ENCODE measurements at regions of chr5 and their contacts with region 1.

Region 1: GRCh38 chr5:147935032-147935431 is 28.7 kb upstream of the C5orf46 start:
- DNase-seq: peak; percentile 96
- ATAC-seq: peak; percentile 95
- H3K4me3 ChIP-seq: no peak overlapping the region
- H3K27ac ChIP-seq: peak overlapping the region; percentile 18
- H3K4me1 ChIP-seq: peaks cover 25% of the 10 kb centered on the region
- H3K27me3 ChIP-seq: no peaks in the 10 kb centered on the region
- CTCF ChIP-seq: peak; percentile 96

Region 2: DNA sequence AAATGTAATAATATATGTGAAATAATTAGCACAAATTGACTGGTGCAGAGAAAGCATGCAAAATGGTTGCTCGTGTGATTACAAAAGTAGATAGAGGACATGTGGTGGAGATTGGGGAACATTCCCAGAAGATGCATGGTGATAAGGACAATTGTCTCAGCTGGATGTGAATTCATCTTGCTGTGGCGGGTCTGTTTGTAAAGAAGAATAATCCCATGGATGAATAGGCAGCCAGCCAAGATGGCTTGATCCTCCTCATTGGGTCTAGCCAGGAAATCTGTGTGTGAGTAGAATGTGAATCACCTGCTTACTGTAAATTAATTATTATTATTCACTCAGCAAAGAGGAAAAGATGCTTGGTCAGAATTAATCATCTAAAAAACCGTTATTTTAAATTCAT is 412.6 kb before region 1 on chr5:
- CTCF ChIA-PET with region 1: no interaction called
- POLR2A ChIA-PET with region 1: no interaction called
- intact Hi-C with region 1: no loop called
- DNase-seq: peak; percentile 53
- ATAC-seq: peak; percentile 66
- H3K4me3 ChIP-seq: no peak overlapping the region
- H3K27ac ChIP-seq: peak overlapping the region; percentile 18; the same call in 1 of the 2 replicates
- H3K4me1 ChIP-seq: peaks cover 4% of the 10 kb centered on the region; the same call in 1 of the 2 replicates
- H3K27me3 ChIP-seq: no peaks in the 10 kb centered on the region
- CTCF ChIP-seq: no peak

Region 3: GRCh38 chr5:147628058-147628895 is 306.8 kb before region 1 on chr5:
- CTCF ChIA-PET with region 1: no interaction called
- POLR2A ChIA-PET with region 1: no interaction called
- intact Hi-C with region 1: loop called (anchors 1 kb)
- DNase-seq: peak; percentile 97
- ATAC-seq: peak; percentile 96
- H3K4me3 ChIP-seq: no peak overlapping the region
- H3K27ac ChIP-seq: no peak overlapping the region
- H3K4me1 ChIP-seq: no peaks in the 10 kb centered on the region
- H3K27me3 ChIP-seq: no peaks in the 10 kb centered on the region
- CTCF ChIP-seq: peak; percentile 95

Region 4: DNA sequence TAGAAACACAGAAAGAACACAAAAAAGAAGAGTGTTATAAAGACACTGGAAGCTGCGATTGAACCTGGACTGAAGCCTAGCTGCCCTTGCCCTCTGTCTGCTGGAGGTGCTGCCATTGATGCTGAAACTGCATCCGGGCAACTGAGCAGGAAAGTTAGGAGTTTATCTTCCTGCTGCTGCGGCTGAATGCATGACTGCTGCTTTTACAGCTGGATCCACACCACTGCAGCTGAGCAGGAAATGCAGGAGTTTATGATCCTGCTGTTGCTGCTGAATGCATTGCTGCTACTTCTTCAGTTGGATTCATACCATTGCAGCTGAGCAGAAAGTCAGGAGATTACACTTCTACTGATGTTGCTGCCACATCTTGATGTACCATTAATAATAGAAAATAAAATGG is 130.7 kb before region 1 on chr5:
- CTCF ChIA-PET with region 1: no interaction called
- POLR2A ChIA-PET with region 1: no interaction called
- intact Hi-C with region 1: no loop called
- DNase-seq: no peak
- ATAC-seq: no peak; the same call in 1 of the 2 replicates
- H3K4me3 ChIP-seq: peak overlapping the region; percentile 32; the same call in 1 of the 2 replicates
- H3K27ac ChIP-seq: peak overlapping the region; percentile 66
- H3K4me1 ChIP-seq: peaks cover 25% of the 10 kb centered on the region
- H3K27me3 ChIP-seq: no peaks in the 10 kb centered on the region
- CTCF ChIP-seq: no peak

Region 5: DNA sequence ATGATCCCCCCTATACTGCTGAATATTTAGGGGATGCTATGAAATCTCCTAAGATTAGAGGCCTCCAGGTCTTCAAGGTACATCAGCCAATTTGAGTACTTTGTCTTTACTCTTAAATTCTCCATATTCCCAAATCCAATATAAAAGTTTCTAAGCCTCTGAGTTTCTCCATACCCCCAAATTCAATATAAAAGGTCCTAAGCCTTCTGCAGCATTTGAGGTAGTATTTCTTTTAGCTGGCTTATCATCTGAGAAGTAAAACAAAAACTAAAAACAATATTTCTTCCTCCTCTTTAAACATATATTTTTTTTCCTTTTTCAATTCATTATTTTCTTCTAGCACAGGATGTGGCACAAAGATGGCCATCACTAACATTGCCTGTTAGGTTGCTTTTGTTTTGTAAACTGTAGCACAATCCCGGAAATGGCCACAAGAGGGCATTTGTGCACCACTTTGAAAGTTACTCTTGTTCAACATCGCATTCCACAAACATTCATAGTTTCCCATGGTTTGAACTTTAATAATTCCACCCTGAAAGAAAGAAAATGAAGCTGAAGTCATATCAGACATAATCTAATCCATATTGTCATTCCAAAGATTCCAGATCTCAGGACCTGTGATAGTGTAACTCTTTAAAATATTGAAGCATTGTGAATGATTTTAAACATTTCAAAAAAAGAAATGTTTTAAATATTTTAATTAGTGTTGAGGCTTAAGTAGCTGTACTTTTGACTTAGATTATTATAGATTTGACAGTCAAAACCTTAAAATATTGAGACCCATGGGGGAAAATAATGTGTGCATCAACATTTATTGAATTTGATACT is 77.5 kb before region 1 on chr5:
- CTCF ChIA-PET with region 1: interaction called, 49 read pairs
- POLR2A ChIA-PET with region 1: no interaction called
- intact Hi-C with region 1: loop called (anchors 1 kb)
- DNase-seq: peak; percentile 95
- ATAC-seq: peak; percentile 79
- H3K4me3 ChIP-seq: no peak overlapping the region
- H3K27ac ChIP-seq: no peak overlapping the region
- H3K4me1 ChIP-seq: peaks cover 18% of the 10 kb centered on the region
- H3K27me3 ChIP-seq: no peaks in the 10 kb centered on the region
- CTCF ChIP-seq: peak; percentile 98

Region 6: GRCh38 chr5:147887024-147887627 is 47.9 kb before region 1 on chr5:
- CTCF ChIA-PET with region 1: interaction called, 21 read pairs
- POLR2A ChIA-PET with region 1: interaction called, 13 read pairs
- intact Hi-C with region 1: loop called (anchors 1 kb)
- DNase-seq: peak; percentile 80
- ATAC-seq: peak; percentile 63
- H3K4me3 ChIP-seq: no peak overlapping the region
- H3K27ac ChIP-seq: peak overlapping the region; percentile 97
- H3K4me1 ChIP-seq: peaks cover 51% of the 10 kb centered on the region
- H3K27me3 ChIP-seq: no peaks in the 10 kb centered on the region
- CTCF ChIP-seq: peak; percentile 96

Region 7: GRCh38 chr5:147898875-147899401 is 36.1 kb before region 1 on chr5:
- CTCF ChIA-PET with region 1: interaction called, 14 read pairs
- POLR2A ChIA-PET with region 1: no interaction called
- intact Hi-C with region 1: no loop called
- DNase-seq: peak; percentile 98
- ATAC-seq: peak; percentile 82
- H3K4me3 ChIP-seq: peak overlapping the region; percentile 22
- H3K27ac ChIP-seq: peak overlapping the region; percentile 97
- H3K4me1 ChIP-seq: peaks cover 96% of the 10 kb centered on the region
- H3K27me3 ChIP-seq: no peaks in the 10 kb centered on the region
- CTCF ChIP-seq: no peak

Region 8: DNA sequence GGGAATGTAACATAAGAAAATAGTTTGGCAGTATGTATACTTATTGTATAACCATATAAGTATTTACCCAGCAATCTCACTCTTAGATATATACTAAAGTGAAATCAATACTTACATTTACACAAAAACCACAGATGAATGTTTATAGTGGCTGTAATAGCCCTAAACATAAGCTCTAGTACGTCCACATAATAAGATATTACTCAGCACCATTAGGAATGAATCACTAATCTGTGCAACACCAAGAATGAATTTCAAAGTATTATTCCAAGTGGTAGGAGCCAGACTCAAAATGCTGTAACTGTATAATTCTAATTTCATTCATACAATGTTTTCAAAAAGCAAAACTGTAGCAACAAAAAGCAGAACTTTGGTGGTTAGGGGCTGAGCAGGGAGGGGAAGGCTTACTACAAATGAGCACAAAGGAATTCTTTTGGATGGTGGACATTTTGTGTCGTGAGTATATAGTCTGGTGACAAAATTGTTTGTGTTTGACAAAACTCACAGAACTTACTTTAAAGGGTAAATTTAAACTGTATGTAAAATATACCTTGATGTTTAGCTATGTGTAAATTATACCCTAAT is 16.8 kb before region 1 on chr5:
- CTCF ChIA-PET with region 1: interaction called, 3 read pairs
- POLR2A ChIA-PET with region 1: interaction called, 14 read pairs
- intact Hi-C with region 1: no loop called
- DNase-seq: peak; percentile 94
- ATAC-seq: peak; percentile 73
- H3K4me3 ChIP-seq: peak overlapping the region; percentile 52; the same call in 1 of the 2 replicates
- H3K27ac ChIP-seq: peak overlapping the region; percentile 97
- H3K4me1 ChIP-seq: peaks cover 72% of the 10 kb centered on the region
- H3K27me3 ChIP-seq: no peaks in the 10 kb centered on the region
- CTCF ChIP-seq: no peak

Region 9: GRCh38 chr5:148364343-148364742 is 429.3 kb after region 1 on chr5:
- CTCF ChIA-PET with region 1: no interaction called
- POLR2A ChIA-PET with region 1: no interaction called
- intact Hi-C with region 1: no loop called
- DNase-seq: no peak
- ATAC-seq: peak; percentile 45; the same call in 1 of the 2 replicates
- H3K4me3 ChIP-seq: no peak overlapping the region
- H3K27ac ChIP-seq: no peak overlapping the region
- H3K4me1 ChIP-seq: no peaks in the 10 kb centered on the region
- H3K27me3 ChIP-seq: no peaks in the 10 kb centered on the region
- CTCF ChIP-seq: no peak

Measured in PC-3 (cell line).